ENCODE measurements at regions of chr1 and their contacts with region 1.

Region 1: GRCh38 chr1:89298461-89298860 is 25.8 kb upstream of the GBP5 start:
- DNase-seq: no peak
- H3K4me3 Mint-ChIP-seq: no peak overlapping the region
- H3K27ac Mint-ChIP-seq: no peak overlapping the region
- H3K4me1 Mint-ChIP-seq: peaks cover 59% of the 10 kb centered on the region
- H3K27me3 Mint-ChIP-seq: peaks cover 1% of the 10 kb centered on the region

Region 2: GRCh38 chr1:89125913-89126580 is 172.4 kb before region 1 on chr1 and contains the start of gene GBP2:
- intact Hi-C with region 1: loop called (anchors 2 kb)
- DNase-seq: no peak
- H3K4me3 Mint-ChIP-seq: peak within 1 kb of the TSS; percentile 97
- H3K27ac Mint-ChIP-seq: peak within 1 kb of the TSS; percentile 99
- H3K4me1 Mint-ChIP-seq: peaks cover 61% of the 10 kb centered on the region
- H3K27me3 Mint-ChIP-seq: no peaks in the 10 kb centered on the region
- total RNA-seq, gene GBP2: 71.9 and 74.1 TPM in 2 replicates

Region 3: GRCh38 chr1:89286549-89287180 is 11.8 kb before region 1 on chr1:
- intact Hi-C with region 1: loop called (anchors 1 kb)
- DNase-seq: no peak
- H3K4me3 Mint-ChIP-seq: peak overlapping the region; percentile 7
- H3K27ac Mint-ChIP-seq: peak overlapping the region; percentile 65
- H3K4me1 Mint-ChIP-seq: peaks cover 64% of the 10 kb centered on the region
- H3K27me3 Mint-ChIP-seq: no peaks in the 10 kb centered on the region

Region 4: DNA sequence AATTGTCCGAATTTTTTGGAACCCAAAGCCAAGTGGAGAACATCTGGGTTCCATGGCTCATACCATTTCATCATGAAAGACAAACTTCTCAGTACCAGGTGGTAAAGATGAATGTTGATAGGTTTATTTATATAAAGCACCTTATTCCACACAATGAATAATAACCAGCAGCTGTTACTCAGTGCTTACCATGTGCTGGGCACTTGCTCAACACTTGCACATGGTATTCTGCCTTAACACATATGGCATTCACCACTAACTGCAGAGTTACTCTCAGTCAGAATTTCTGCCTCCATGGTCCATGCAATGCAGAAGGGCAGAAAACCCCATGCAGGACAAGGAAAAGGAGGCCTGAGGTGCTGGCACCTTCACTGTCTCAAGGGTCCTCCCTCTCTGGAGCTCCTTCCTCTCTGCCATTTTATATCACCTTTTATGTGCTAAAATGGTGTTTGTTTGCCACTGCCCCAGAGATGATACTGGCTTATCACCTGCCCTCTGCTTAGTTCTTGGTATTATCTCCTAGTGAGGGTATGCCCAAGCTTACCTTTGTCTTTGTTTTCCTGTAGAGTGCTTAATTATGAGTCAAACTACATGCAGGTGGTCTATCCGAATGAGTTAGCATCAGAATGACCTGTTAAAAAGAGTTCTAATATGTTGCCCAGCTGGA is 619.8 kb after region 1 on chr1:
- intact Hi-C with region 1: no loop called
- DNase-seq: no peak
- H3K4me3 Mint-ChIP-seq: no peak overlapping the region
- H3K27ac Mint-ChIP-seq: no peak overlapping the region
- H3K4me1 Mint-ChIP-seq: peaks cover 8% of the 10 kb centered on the region
- H3K27me3 Mint-ChIP-seq: no peaks in the 10 kb centered on the region